ENCODE measurements at regions of chr17 and their contacts with region 1.

Region 1: DNA sequence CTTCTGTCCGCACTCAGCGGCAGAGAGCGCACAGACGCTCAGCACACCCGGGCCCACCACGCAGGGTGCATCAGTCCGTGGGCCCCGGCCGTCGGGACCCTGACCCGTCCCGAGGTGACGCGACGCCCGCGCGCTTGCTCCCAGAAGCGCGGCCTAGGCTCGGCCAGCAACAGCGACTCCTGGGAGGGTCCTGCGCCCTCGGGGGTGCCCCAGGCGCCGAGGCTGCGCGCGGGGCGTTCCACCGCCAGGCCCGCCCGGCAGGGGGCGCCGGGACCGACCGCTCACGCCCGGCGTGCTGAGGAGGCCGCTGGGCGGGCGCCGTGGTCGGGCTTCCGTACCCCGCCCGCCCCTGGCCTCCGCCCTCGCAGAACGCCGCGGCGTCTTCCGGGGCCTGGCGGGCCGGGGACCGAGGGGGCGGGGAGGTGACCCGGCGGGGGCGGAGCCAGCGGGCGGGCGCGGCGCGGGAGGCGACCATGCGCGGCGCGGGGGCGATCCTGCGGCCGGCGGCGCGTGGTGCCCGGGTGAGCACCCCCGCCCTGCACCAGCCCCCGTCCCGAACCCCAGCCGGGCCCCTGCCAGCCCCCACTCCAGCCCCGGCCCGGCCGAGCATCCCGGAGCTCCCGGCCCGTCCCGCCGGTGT is at the start of gene CISD3:
- DNase-seq: peak; percentile 95
- ATAC-seq: peak; percentile 93
- H3K4me3 ChIP-seq: peak within 1 kb of the TSS; percentile 73
- H3K27ac ChIP-seq: peak within 1 kb of the TSS; percentile 85
- H3K4me1 ChIP-seq: peaks cover 42% of the 10 kb centered on the region
- H3K27me3 ChIP-seq: no peaks in the 10 kb centered on the region
- CTCF ChIP-seq: peak; percentile 58
- total RNA-seq, gene CISD3: 29.7 TPM

Region 2: DNA sequence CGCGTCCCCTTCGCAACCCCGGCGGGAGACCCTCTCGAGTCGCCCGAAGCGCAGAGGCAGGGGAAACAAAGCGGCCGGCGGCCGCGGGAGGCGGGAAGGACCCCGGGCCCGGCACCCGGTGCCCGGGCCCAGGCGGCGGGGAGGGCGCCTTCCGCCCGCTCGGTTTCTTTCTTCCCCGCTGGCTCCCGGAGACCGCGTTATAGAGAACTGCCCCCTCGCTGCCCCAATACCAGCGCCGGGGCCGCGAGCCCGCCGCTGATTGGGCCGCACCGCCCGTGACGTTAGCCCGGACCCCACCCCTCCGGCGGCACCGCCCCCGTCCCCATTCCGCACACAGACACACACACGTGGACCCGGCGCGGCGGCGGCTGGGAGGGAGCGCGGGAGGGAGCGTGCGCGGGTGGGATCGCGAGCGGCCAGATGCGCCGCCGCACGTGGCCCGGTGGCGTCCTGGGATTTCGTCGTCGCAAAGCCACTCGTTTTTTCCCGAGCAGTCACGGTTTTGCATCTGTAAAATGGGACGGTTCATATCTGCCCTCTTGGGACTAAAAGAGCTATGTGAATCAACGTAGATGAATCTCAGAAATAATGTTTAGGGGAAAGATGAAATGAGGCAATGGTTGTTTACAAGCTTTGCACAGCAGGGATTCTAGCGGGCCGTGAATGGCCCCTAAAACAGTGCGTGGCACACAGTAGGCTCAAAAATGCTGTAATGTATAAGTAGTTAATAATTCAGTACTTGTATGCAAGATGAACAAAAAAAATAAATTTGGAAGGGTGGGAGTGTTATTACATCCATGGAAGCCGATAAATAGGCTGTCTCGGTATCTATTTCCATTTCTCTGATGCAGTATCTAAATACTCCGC is 55.0 kb before region 1 on chr17 and contains the start of gene EPOP:
- intact Hi-C with region 1: loop called (anchors 5 kb)
- DNase-seq: peak; percentile 94
- ATAC-seq: peak; percentile 92
- H3K4me3 ChIP-seq: peak within 1 kb of the TSS; percentile 66
- H3K27ac ChIP-seq: peak within 1 kb of the TSS; percentile 18
- H3K4me1 ChIP-seq: peaks cover 20% of the 10 kb centered on the region
- H3K27me3 ChIP-seq: peaks cover 35% of the 10 kb centered on the region
- CTCF ChIP-seq: no peak
- total RNA-seq, gene EPOP: 2.1 TPM

Region 3: GRCh38 chr17:39026980-39027451 is 297.0 kb after region 1 on chr17:
- intact Hi-C with region 1: no loop called
- DNase-seq: peak; percentile 83
- ATAC-seq: peak; percentile 86
- H3K4me3 ChIP-seq: peak overlapping the region; percentile 44
- H3K27ac ChIP-seq: no peak overlapping the region
- H3K4me1 ChIP-seq: peaks cover 5% of the 10 kb centered on the region
- H3K27me3 ChIP-seq: no peaks in the 10 kb centered on the region
- CTCF ChIP-seq: no peak